CD4-positive, alpha-beta memory T cell (primary cell): ENCODE measurements at regions of chr1 and their contacts with region 1.

Region 1: DNA sequence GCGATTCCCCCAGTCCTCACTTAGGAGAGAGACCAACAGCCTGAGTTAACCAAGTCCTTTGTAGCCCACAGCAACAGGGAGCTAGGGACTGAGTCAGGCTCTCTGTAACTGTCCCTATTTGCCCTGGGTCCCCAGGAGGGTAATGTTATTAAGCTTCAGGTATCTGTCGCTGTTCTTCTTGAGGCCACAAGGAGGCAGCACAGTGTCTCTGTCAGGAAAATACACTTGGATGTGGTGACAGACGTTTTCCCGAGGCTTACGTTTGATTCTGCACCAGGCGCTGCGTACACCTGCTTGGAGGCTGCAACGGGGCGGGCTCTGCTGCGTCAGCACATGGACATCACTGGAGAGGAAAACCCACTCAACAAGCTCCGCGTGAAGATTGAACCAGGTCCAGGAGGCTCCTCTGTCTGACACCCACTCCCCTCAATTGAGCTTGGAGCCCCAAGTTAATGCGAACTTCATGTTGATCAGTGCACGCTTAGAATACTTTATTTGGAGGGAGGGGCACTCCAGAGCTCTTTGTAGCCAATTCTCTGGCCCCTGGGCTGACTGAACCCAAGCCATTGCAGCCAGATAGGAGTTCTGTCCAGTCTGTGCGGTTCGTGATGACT is 10.7 kb upstream of the ELF3 start:
- DNase-seq: peak in 4 of 5 donors; percentile 18 to 24 (median 22)
- H3K4me3 ChIP-seq: no peak overlapping the region
- H3K4me3 Mint-ChIP-seq: no peak overlapping the region
- H3K27ac ChIP-seq: no peak overlapping the region
- H3K27ac Mint-ChIP-seq: no peak overlapping the region
- H3K4me1 ChIP-seq: no peaks in the 10 kb centered on the region
- H3K4me1 Mint-ChIP-seq: no peaks in the 10 kb centered on the region
- H3K27me3 ChIP-seq: no peaks in the 10 kb centered on the region
- H3K27me3 Mint-ChIP-seq: no peaks in the 10 kb centered on the region

Region 2: GRCh38 chr1:200971955-200972711 is 1027.6 kb before region 1 on chr1:
- CTCF ChIA-PET with region 1: no interaction called
- POLR2A ChIA-PET with region 1: no interaction called
- intact Hi-C with region 1: no loop called
- DNase-seq: peak; percentile 51 to 60 (median 56)
- H3K4me3 ChIP-seq: no peak overlapping the region
- H3K4me3 Mint-ChIP-seq: no peak overlapping the region
- H3K27ac ChIP-seq: no peak overlapping the region
- H3K27ac Mint-ChIP-seq: peak overlapping the region in 1 of 7 donors; percentile 38
- H3K4me1 ChIP-seq: no peaks in the 10 kb centered on the region
- H3K4me1 Mint-ChIP-seq: peaks cover 0 to 2% (median 0%) of the 10 kb centered on the region in 4 donors
- H3K27me3 ChIP-seq: no peaks in the 10 kb centered on the region
- H3K27me3 Mint-ChIP-seq: no peaks in the 10 kb centered on the region

Region 3: DNA sequence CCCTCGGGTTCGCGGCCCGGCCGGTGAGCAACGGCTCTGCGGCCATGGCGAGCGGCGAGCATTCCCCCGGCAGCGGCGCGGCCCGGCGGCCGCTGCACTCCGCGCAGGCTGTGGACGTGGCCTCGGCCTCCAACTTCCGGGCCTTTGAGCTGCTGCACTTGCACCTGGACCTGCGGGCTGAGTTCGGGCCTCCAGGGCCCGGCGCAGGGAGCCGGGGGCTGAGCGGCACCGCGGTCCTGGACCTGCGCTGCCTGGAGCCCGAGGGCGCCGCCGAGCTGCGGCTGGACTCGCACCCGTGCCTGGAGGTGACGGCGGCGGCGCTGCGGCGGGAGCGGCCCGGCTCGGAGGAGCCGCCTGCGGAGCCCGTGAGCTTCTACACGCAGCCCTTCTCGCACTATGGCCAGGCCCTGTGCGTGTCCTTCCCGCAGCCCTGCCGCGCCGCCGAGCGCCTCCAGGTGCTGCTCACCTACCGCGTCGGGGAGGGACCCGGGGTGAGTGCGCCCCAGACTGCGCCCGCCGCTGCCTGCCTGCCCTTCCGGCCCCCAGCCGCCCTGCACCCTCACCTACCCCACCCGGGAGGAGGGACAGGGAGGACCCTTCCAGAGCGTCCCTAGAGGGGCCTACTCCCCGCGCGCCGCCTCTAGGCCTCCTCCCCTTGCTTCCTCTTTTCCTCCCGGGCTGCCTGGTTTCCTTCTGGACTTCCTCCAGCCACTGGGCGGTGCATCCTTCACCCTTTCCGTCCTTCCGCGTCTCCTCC is 16.9 kb before region 1 on chr1 and contains the start of gene RNPEP:
- CTCF ChIA-PET with region 1: interaction called, 13 read pairs
- POLR2A ChIA-PET with region 1: no interaction called
- intact Hi-C with region 1: loop called (anchors 2 kb)
- DNase-seq: peak; percentile 50 to 71 (median 60)
- H3K4me3 ChIP-seq: peak within 1 kb of the TSS; percentile 52 to 77
- H3K4me3 Mint-ChIP-seq: peak within 1 kb of the TSS; percentile 92 to 100 (median 98)
- H3K27ac ChIP-seq: peak within 1 kb of the TSS; percentile 63
- H3K27ac Mint-ChIP-seq: peak within 1 kb of the TSS; percentile 81 to 98 (median 94)
- H3K4me1 ChIP-seq: peaks cover 17% of the 10 kb centered on the region
- H3K4me1 Mint-ChIP-seq: peaks cover 18 to 25% (median 22%) of the 10 kb centered on the region in 4 donors
- H3K27me3 ChIP-seq: no peaks in the 10 kb centered on the region
- H3K27me3 Mint-ChIP-seq: no peaks in the 10 kb centered on the region
- total RNA-seq, gene RNPEP: 25.9 to 29.1 TPM